Heart right ventricle (tissue), 16 donors: ENCODE measurements at regions of chr3 and their contacts with region 1.

Region 1: DNA sequence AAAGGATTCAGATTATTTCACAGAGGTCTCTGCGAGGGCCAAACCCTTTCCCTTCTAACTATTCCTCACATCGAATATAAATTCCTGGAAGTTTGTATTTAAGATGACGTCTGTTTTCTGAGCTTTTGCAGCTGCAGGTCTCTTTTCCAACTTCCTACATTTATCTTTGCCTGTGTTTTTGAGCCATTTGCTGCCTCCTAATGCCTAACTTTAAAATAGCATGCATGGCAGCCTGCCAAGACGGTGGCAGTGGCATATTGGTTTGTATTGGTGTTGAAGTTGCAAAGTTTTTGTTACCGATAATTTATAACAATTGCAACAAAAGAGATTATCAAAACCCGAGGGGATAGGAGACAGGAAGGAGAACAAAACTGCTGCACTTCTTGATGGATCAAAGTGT is 187.1 kb upstream of the DNAJC19 start:
- DNase-seq: peak; percentile 34 to 49
- ATAC-seq: peak in 1 of 8 donors; percentile 48
- H3K4me3 ChIP-seq: no peak overlapping the region
- H3K27ac ChIP-seq: no peak overlapping the region
- H3K4me1 ChIP-seq: no peaks in the 10 kb centered on the region
- H3K27me3 ChIP-seq: no peaks in the 10 kb centered on the region
- CTCF ChIP-seq: peak in 8 of 9 donors; percentile 40 to 70 (median 62)

Region 2: DNA sequence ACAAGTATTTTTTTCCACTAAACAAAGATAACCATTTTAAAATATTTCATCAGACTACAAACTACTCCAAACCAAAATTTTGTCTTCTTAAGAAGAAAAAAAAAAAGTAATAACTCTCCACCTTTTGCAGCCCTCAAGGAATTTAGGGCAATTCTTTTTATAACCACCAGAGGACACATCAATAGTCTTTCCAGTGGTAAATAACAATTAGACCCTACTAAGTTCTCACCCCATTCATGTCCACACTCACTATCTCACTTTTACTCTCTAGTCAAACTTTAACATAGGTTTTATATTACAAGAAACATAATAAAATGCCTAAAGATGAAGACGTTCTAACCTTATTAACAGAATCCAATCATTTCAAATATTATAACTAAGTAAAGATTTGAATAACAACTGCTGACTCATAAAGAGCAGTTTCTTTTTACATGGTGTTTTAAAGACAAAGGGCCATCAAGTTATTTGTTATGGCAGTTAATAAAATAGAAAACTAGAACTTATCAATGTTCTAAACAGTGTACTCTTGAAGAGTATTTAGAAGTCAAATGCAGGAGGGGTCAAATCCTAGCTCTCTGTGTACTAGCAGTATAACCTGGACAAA is 530.3 kb before region 1 on chr3:
- intact Hi-C with region 1: loop called in 1 of 10 experiments (anchors 5 kb)
- DNase-seq: no peak
- ATAC-seq: no peak
- H3K4me3 ChIP-seq: no peak overlapping the region
- H3K27ac ChIP-seq: no peak overlapping the region
- H3K4me1 ChIP-seq: no peaks in the 10 kb centered on the region
- H3K27me3 ChIP-seq: peaks cover 0 to 11% (median 0%) of the 10 kb centered on the region in 7 donors
- CTCF ChIP-seq: peak in 3 of 9 donors; percentile 6 to 19 (median 10)

Region 3: GRCh38 chr3:180802837-180803236 is 373.8 kb before region 1 on chr3:
- intact Hi-C with region 1: loop called in 9 of 10 experiments (anchors 2 to 10 kb)
- DNase-seq: no peak
- ATAC-seq: no peak
- H3K4me3 ChIP-seq: no peak overlapping the region
- H3K27ac ChIP-seq: no peak overlapping the region
- H3K4me1 ChIP-seq: peaks cover 0 to 13% (median 0%) of the 10 kb centered on the region in 9 donors
- H3K27me3 ChIP-seq: no peaks in the 10 kb centered on the region
- CTCF ChIP-seq: peak in 7 of 9 donors; percentile 49 to 71 (median 63)

Region 4: DNA sequence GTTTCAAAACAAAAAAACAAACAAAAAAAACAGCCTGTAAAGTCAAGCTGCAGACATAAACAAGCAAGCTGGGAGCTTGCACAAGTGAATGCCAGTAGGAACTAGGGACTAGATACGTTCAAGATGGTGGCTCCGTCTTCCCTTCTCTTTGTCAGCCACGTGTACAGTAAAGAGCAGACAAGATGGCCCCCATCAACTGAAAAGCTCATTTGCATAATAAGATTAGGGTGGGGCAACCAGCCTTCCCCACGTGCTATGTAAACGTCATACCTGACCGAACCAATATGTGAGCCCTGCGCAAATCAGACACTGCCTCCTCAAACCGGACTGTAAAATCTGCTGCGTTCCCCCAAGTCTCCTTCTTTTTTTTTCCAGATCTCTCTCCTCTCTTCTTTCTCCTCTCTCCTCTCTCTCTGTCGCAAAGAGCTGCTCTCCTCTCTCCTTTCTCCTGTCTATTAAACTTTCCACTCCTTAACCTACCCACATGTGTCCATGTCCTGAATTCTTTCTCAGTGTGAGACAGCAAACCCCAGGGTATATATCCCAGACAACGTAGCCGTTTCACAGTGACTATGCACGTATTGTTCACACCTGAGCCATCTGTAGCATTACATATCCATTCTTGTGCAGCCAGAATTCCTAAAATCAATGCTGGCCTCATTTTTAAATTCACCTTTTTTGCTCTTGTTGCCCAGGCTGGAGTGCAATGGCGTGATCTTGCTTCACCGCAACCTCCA is 295.4 kb before region 1 on chr3:
- intact Hi-C with region 1: loop called in 1 of 10 experiments (anchors 10 kb)
- DNase-seq: no peak
- ATAC-seq: no peak
- H3K4me3 ChIP-seq: no peak overlapping the region
- H3K27ac ChIP-seq: no peak overlapping the region
- H3K4me1 ChIP-seq: no peaks in the 10 kb centered on the region
- H3K27me3 ChIP-seq: no peaks in the 10 kb centered on the region
- CTCF ChIP-seq: no peak

Region 5: GRCh38 chr3:181040030-181040429 is 136.6 kb before region 1 on chr3:
- intact Hi-C with region 1: no loop called
- DNase-seq: no peak
- ATAC-seq: no peak
- H3K4me3 ChIP-seq: no peak overlapping the region
- H3K27ac ChIP-seq: no peak overlapping the region
- H3K4me1 ChIP-seq: no peaks in the 10 kb centered on the region
- H3K27me3 ChIP-seq: no peaks in the 10 kb centered on the region
- CTCF ChIP-seq: no peak